K562 (cell line): ENCODE measurements at regions of chr20 and their contacts with region 1.

Region 1: GRCh38 chr20:44388466-44389023 is 33.0 kb downstream of the HNF4A start:
- DNase-seq: peak; percentile 74 to 79 (median 76)
- ATAC-seq: peak; percentile 92
- H3K4me3 ChIP-seq: no peak overlapping the region
- H3K27ac ChIP-seq: no peak overlapping the region
- H3K4me1 ChIP-seq: peaks cover 0 to 6% of the 10 kb centered on the region in 2 experiments; a peak in 3 of 5 replicates
- H3K27me3 ChIP-seq: peaks cover 2 to 20% of the 10 kb centered on the region in 2 experiments; a peak in 2 of 5 replicates
- CTCF ChIP-seq: peak; percentile 91 to 94 (median 92)
- EP300 ChIP-seq: no peak
- POLR2A ChIP-seq: no peak
- RAD21 ChIP-seq: peak; percentile 97 to 100

Region 2: DNA sequence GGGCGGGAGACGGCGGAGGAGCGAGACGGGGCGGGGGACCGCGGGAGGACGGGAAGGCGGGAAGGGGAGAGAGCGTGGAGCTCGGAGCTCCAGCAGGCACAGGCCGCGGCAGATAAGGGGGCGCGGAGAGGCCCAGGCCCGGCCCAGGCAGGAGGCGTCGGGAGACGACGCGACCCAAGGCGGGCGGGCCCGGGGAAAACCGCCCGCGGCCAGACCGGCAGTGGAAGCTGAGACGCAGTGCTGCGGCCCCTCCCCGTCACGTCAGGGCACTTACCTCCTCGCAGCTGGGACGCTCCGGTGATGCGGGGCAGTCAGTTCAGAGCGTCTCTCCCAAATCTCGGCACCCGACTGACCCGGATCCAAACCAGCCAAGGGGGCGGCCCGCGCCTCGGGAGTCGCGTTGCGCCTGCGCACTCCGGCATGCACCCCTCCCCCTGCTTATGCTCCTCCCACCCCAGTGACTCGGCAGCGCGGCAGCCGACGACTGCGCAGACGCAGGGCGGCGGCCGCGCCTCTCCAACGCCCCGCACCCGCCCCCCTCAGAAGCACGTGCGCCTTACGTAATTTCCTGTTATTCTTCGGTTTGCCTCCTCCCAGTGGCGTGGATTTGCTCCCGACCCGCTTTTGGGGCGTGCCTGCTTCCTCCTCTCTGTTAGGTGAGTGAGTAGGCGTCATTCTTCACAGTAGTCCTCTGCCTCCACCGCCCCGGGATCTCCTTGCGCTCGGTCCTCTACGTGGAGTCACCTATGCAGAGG is 177.9 kb before region 1 on chr20 and contains the start of gene OSER1:
- CTCF ChIA-PET with region 1: interaction called, 79 read pairs
- POLR2A ChIA-PET with region 1: interaction called, 4 read pairs
- in situ Hi-C with region 1: loop called (anchors 5 kb)
- intact Hi-C with region 1: no loop called
- DNase-seq: peak; percentile 97 to 99 (median 99)
- ATAC-seq: peak; percentile 89
- H3K4me3 ChIP-seq: peak within 1 kb of the TSS; percentile 94
- H3K27ac ChIP-seq: peak within 1 kb of the TSS; percentile 92
- H3K4me1 ChIP-seq: peaks cover 17 to 24% of the 10 kb centered on the region in 2 experiments
- H3K27me3 ChIP-seq: no peaks in the 10 kb centered on the region
- CTCF ChIP-seq: no peak
- EP300 ChIP-seq: peak; percentile 60; the same call in 1 of the 2 replicates
- POLR2A ChIP-seq: peak; percentile 85
- RAD21 ChIP-seq: no peak
- polyA plus RNA-seq, gene OSER1: 54.8 to 57.3 TPM

Region 3: GRCh38 chr20:44310664-44311639 is 77.6 kb before region 1 on chr20 and contains the start of gene FITM2:
- CTCF ChIA-PET with region 1: interaction called, 3 read pairs
- POLR2A ChIA-PET with region 1: interaction called, 3 read pairs
- in situ Hi-C with region 1: no loop called
- intact Hi-C with region 1: loop called (anchors 2 kb)
- DNase-seq: peak; percentile 97 to 99 (median 98)
- ATAC-seq: peak; percentile 96
- H3K4me3 ChIP-seq: peak within 1 kb of the TSS; percentile 63
- H3K27ac ChIP-seq: peak within 1 kb of the TSS; percentile 20; the same call in 1 of the 3 replicates
- H3K4me1 ChIP-seq: peaks cover 12 to 15% of the 10 kb centered on the region in 2 experiments
- H3K27me3 ChIP-seq: no peaks in the 10 kb centered on the region
- CTCF ChIP-seq: peak; percentile 92 to 96 (median 95)
- EP300 ChIP-seq: no peak
- POLR2A ChIP-seq: peak; percentile 53; the same call in 1 of the 2 replicates
- RAD21 ChIP-seq: peak; percentile 89
- polyA plus RNA-seq, gene FITM2: 0.64 to 0.87 TPM

Region 4: DNA sequence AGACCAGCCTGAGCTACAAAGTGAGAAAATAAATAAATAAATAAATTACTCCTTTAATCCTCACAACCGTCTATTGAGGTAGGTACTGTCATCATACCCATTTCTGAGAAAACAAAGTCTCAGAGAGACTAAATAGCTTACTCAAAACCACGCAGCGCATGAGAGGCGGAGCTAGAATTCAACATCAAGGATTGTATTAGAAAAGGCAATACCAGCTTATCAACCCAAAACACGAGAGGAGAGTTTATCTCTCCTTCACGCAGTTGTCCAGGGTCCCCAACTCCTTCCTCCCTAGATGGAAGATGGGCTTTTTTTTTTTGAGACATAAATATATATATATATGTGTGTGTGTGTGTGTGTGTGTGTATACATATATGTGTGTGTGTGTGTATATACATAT is 20.8 kb before region 1 on chr20:
- CTCF ChIA-PET with region 1: no interaction called
- POLR2A ChIA-PET with region 1: no interaction called
- in situ Hi-C with region 1: no loop called
- intact Hi-C with region 1: no loop called
- DNase-seq: peak in 2 of 4 experiments; percentile 9 to 12
- ATAC-seq: no peak
- H3K4me3 ChIP-seq: no peak overlapping the region
- H3K27ac ChIP-seq: no peak overlapping the region
- H3K4me1 ChIP-seq: no peaks in the 10 kb centered on the region; a peak in 1 of 5 replicates
- H3K27me3 ChIP-seq: peaks cover 0 to 6% of the 10 kb centered on the region in 2 experiments; a peak in 1 of 5 replicates
- CTCF ChIP-seq: no peak
- EP300 ChIP-seq: no peak
- POLR2A ChIP-seq: no peak
- RAD21 ChIP-seq: no peak

Region 5: GRCh38 chr20:44442298-44443070 is 53.9 kb after region 1 on chr20:
- CTCF ChIA-PET with region 1: no interaction called
- POLR2A ChIA-PET with region 1: no interaction called
- in situ Hi-C with region 1: no loop called
- intact Hi-C with region 1: no loop called
- DNase-seq: no peak
- ATAC-seq: no peak
- H3K4me3 ChIP-seq: no peak overlapping the region
- H3K27ac ChIP-seq: no peak overlapping the region
- H3K4me1 ChIP-seq: no peaks in the 10 kb centered on the region; a peak in 1 of 5 replicates
- H3K27me3 ChIP-seq: peaks cover 2 to 18% of the 10 kb centered on the region in 2 experiments; a peak in 3 of 5 replicates
- CTCF ChIP-seq: no peak
- EP300 ChIP-seq: no peak
- POLR2A ChIP-seq: no peak
- RAD21 ChIP-seq: no peak

Region 6: GRCh38 chr20:44609511-44610312 is 221.2 kb after region 1 on chr20:
- CTCF ChIA-PET with region 1: interaction called, 14 read pairs
- POLR2A ChIA-PET with region 1: no interaction called
- in situ Hi-C with region 1: loop called (anchors 5 kb)
- intact Hi-C with region 1: loop called (anchors 1 kb)
- DNase-seq: peak; percentile 81 to 91 (median 84)
- ATAC-seq: peak; percentile 99
- H3K4me3 ChIP-seq: no peak overlapping the region
- H3K27ac ChIP-seq: peak overlapping the region; percentile 19; the same call in 1 of the 3 replicates
- H3K4me1 ChIP-seq: peaks cover 5 to 19% of the 10 kb centered on the region in 2 experiments; a peak in 4 of 5 replicates
- H3K27me3 ChIP-seq: no peaks in the 10 kb centered on the region
- CTCF ChIP-seq: peak; percentile 95 to 99 (median 98)
- EP300 ChIP-seq: no peak
- POLR2A ChIP-seq: no peak; the same call in 1 of the 2 replicates
- RAD21 ChIP-seq: peak; percentile 97 to 98

Region 7: DNA sequence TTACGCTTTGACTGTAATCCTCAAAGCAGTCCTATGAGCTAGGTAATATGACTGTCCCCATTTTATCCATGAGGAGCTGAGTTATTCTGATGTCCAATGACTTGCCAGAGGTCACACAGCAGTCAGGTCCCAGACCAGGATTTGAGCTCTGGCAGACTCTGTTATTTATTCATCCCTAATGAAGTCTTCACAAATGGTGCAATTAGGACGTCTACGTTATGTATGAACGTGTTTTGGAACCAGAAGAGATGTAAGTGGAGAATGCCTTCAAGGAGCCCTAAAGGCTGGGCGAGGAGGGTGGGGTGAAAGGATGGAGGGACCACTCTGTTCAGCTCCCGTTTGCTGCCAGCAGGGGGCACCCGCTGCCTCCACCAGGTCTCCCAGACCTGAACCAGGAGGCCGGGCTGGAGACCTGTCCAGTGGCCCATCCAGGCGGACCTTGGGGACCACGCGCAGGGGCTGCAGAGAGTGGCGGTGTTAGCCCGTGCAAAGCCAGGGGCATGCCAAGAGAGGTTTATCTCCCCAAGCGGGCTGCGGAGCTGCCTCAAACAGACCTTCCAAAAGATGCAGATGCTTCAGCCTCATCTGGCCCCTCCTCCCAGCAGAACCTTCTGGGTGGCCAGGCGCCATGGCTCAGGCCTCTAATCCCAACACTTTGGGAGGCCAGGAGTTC is 1598.7 kb after region 1 on chr20:
- CTCF ChIA-PET with region 1: no interaction called
- POLR2A ChIA-PET with region 1: no interaction called
- in situ Hi-C with region 1: no loop called
- intact Hi-C with region 1: no loop called
- DNase-seq: peak; percentile 85 to 90 (median 87)
- ATAC-seq: peak; percentile 94
- H3K4me3 ChIP-seq: no peak overlapping the region
- H3K27ac ChIP-seq: no peak overlapping the region
- H3K4me1 ChIP-seq: peaks cover 20 to 23% of the 10 kb centered on the region in 2 experiments
- H3K27me3 ChIP-seq: no peaks in the 10 kb centered on the region
- CTCF ChIP-seq: peak; percentile 88 to 97 (median 91)
- EP300 ChIP-seq: no peak
- POLR2A ChIP-seq: no peak
- RAD21 ChIP-seq: peak; percentile 57 to 76